Activated CD8-positive, alpha-beta T cell treated with anti-CD3 and anti-CD28 coated beads, Interleukin-2, amount 10 ng/mL, durations not matched to agents 7 days and 5 days (primary cell): ENCODE measurements at regions of chr9 and their contacts with region 1.

Region 1: DNA sequence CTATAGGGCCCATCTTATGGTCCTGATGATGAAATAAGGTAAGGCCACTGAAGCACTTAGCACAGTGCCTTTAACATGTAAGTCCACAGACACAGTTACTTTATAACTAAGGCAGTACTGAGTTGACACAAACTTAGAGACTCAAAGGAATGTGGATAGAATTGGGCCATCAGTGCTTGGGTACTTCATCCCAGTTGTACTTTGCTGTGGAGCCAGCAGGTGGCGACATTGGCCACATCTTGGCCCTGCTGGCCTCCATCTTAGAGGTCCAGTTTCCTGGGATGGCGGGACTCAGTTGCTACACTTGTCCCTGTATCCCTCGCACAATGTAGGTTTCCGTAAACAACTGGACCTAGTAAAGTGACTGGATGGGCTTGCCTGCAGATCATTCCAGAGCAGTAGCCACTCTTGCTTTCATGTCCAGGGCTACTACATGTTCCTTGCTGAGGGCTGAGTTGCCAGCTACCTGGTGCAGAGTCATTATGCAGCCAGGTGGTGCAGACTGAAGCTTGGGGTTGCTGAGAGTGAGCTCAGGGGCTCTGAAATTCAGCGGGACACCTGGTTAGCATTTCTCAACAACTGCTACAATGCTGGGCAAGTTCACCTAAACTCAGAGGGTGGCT is 10.6 kb downstream of the MTAP start:
- DNase-seq: peak; percentile 78
- ATAC-seq: peak; percentile 78
- H3K4me3 Mint-ChIP-seq: no peak overlapping the region
- H3K27ac Mint-ChIP-seq: no peak overlapping the region
- H3K4me1 Mint-ChIP-seq: peaks cover 32% of the 10 kb centered on the region
- H3K27me3 Mint-ChIP-seq: no peaks in the 10 kb centered on the region

Region 2: GRCh38 chr9:21802195-21803000 is 10.7 kb before region 1 on chr9 and contains the start of gene MTAP:
- CTCF ChIA-PET with region 1: interaction called, 20 read pairs
- POLR2A ChIA-PET with region 1: no interaction called
- DNase-seq: peak; percentile 76
- ATAC-seq: peak; percentile 86
- H3K4me3 Mint-ChIP-seq: peak within 1 kb of the TSS; percentile 99
- H3K27ac Mint-ChIP-seq: peak within 1 kb of the TSS; percentile 99
- H3K4me1 Mint-ChIP-seq: peaks cover 38% of the 10 kb centered on the region
- H3K27me3 Mint-ChIP-seq: peaks cover 25% of the 10 kb centered on the region
- total RNA-seq, gene MTAP: 62.5 to 68.2 TPM

Region 3: DNA sequence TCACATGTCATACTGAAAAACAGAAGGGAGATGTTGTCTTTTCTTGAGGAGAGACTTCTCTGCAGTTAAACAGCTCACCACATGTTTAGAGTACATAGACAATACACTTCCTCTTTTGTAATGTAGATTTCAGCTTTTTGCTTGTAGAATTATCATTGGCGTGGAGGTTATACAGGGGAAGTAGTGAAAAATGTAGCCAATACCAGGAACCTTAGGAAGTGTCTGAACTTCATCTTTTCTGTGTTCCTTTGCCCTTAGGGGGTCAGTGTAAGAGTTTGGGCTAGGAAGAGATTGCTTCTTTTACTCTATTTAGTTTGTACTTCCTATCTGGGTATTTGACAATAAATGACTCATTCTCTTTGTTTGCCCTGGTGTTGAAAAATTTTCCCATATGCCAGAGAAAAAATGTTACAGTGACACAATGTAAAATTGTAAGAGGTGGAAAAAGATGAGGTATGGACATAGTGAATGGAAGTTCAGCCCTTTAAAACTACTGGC is 217.1 kb after region 1 on chr9:
- CTCF ChIA-PET with region 1: interaction called, 14 read pairs
- POLR2A ChIA-PET with region 1: no interaction called
- DNase-seq: no peak
- ATAC-seq: no peak
- H3K4me3 Mint-ChIP-seq: no peak overlapping the region
- H3K27ac Mint-ChIP-seq: no peak overlapping the region
- H3K4me1 Mint-ChIP-seq: peaks cover 18% of the 10 kb centered on the region
- H3K27me3 Mint-ChIP-seq: peaks cover 9% of the 10 kb centered on the region

Region 4: GRCh38 chr9:22052376-22052945 is 239.4 kb after region 1 on chr9:
- CTCF ChIA-PET with region 1: interaction called, 13 read pairs
- POLR2A ChIA-PET with region 1: no interaction called
- DNase-seq: peak; percentile 65
- ATAC-seq: peak; percentile 72
- H3K4me3 Mint-ChIP-seq: peak overlapping the region; percentile 9
- H3K27ac Mint-ChIP-seq: peak overlapping the region; percentile 77
- H3K4me1 Mint-ChIP-seq: peaks cover 75% of the 10 kb centered on the region
- H3K27me3 Mint-ChIP-seq: peaks cover 5% of the 10 kb centered on the region

Region 5: GRCh38 chr9:22238809-22239684 is 426.0 kb after region 1 on chr9:
- CTCF ChIA-PET with region 1: interaction called, 58 read pairs
- POLR2A ChIA-PET with region 1: interaction called, 3 read pairs
- DNase-seq: no peak
- ATAC-seq: peak; percentile 36
- H3K4me3 Mint-ChIP-seq: no peak overlapping the region
- H3K27ac Mint-ChIP-seq: peak overlapping the region; percentile 14
- H3K4me1 Mint-ChIP-seq: peaks cover 48% of the 10 kb centered on the region
- H3K27me3 Mint-ChIP-seq: peaks cover 17% of the 10 kb centered on the region

Region 6: DNA sequence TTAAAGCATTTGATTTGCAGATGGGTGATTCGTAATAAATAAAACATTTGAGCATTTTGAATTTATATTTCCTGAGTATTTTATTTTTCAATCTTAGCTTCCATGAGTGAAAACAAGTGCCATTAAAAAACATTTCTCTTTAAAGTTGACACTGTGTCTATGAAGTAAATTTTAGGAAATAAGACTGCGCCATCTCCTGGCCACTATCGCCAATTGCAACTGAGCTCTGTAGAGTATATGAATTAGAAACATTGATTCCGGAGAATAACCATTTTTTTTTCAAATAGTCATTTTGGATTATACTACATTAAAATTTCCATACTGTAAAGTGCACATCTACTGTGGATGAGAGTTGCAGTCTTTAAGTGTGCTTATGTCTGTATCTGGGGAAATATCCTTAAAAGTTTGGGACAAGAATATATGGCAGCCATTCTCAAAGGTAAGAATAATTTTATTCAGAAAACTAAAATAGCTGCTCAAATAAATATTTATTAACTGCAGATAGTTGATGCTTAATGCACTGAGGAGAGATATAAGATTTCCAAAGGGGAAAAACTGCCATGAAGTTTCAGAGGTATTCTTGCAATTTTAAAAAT is 639.5 kb after region 1 on chr9:
- CTCF ChIA-PET with region 1: interaction called, 14 read pairs
- POLR2A ChIA-PET with region 1: no interaction called
- DNase-seq: peak; percentile 61
- ATAC-seq: no peak
- H3K4me3 Mint-ChIP-seq: no peak overlapping the region
- H3K27ac Mint-ChIP-seq: no peak overlapping the region
- H3K4me1 Mint-ChIP-seq: peaks cover 2% of the 10 kb centered on the region
- H3K27me3 Mint-ChIP-seq: peaks cover 27% of the 10 kb centered on the region